Activated naive CD4-positive, alpha-beta T cell treated with anti-CD3 and anti-CD28 coated beads, Interleukin-2, amount 10 ng/mL, durations not matched to agents 7 days and 5 days (primary cell): ENCODE measurements at regions of chr7 and their contacts with region 1.

Region 1: DNA sequence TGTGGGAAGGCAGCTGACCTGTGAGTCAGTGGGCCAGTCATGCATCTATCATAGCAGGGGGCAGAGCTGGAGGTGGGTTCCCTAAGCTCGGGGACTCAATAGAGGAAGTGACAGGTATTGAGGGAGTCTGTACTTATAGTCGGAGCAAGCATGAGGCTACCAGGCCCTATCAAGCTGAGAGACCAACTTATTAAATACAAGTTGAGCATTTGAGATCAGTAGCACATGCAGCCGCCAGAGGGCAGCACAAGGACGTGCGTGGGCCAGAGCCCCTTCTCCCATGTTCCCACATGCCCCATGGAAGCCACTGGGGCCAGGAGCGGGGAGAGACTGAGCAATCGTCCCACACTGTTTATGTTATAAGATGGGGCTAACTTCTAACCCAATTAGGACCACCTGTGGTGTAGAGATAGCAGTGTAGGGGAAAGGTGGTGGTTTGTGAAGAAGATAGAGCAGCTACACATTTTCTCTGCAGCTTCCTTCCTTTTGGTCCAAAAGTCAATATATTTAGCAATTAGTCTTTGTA is 13.0 kb upstream of the STK31 start:
- DNase-seq: peak; percentile 65
- H3K4me3 Mint-ChIP-seq: no peak overlapping the region
- H3K27ac Mint-ChIP-seq: no peak overlapping the region
- H3K4me1 Mint-ChIP-seq: no peaks in the 10 kb centered on the region
- H3K27me3 Mint-ChIP-seq: no peaks in the 10 kb centered on the region

Region 2: GRCh38 chr7:23546897-23547572 is 149.9 kb before region 1 on chr7:
- CTCF ChIA-PET with region 1: interaction called, 15 read pairs
- DNase-seq: peak; percentile 84
- H3K4me3 Mint-ChIP-seq: no peak overlapping the region
- H3K27ac Mint-ChIP-seq: no peak overlapping the region
- H3K4me1 Mint-ChIP-seq: peaks cover 9% of the 10 kb centered on the region
- H3K27me3 Mint-ChIP-seq: peaks cover 8% of the 10 kb centered on the region

Region 3: GRCh38 chr7:23685731-23686130 is 11.2 kb before region 1 on chr7:
- CTCF ChIA-PET with region 1: interaction called, 14 read pairs
- DNase-seq: no peak
- H3K4me3 Mint-ChIP-seq: no peak overlapping the region
- H3K27ac Mint-ChIP-seq: no peak overlapping the region
- H3K4me1 Mint-ChIP-seq: peaks cover 8% of the 10 kb centered on the region
- H3K27me3 Mint-ChIP-seq: no peaks in the 10 kb centered on the region

Region 4: DNA sequence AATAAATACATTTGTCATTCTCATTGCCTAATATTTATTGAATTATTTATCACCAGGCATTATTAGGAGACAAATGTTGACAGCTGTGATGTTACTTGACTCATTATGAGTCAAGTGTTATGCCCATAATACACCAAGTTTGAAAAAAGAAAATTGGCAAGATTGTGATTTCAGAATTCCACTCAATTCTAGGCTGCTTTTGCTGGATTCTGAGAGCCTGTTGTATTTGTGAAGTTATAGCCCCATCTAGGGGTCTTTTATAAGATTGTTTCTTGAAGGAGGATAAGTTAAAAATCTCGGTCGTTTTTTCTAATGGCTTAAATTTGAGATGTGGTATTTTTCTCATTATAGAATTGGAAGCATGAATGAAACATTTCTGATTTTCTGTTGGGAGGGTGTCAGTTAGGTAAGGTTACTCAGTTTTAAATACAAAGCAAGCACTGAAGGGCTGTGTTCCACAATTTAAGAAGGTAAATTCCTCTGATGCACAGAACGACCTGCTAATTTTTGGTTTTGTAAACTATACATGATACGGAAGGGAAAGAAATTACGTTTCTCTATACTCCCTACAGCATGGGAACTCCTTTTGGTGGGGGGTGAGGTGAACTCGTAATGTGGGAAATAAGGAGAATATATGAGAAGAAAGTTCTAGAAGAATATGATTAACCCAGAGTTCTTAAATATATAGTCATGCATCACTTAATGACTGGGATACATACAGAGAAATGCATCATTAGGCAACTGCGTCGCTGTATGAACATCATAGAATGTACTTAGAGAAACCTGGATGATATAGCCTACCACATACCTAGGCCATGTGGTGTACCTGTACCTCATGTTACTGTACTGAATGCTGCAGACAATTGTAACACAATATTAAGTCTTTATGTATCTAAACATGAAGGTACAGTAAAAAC is 15.6 kb after region 1 on chr7:
- CTCF ChIA-PET with region 1: interaction called, 24 read pairs
- DNase-seq: no peak
- H3K4me3 Mint-ChIP-seq: no peak overlapping the region
- H3K27ac Mint-ChIP-seq: no peak overlapping the region
- H3K4me1 Mint-ChIP-seq: no peaks in the 10 kb centered on the region
- H3K27me3 Mint-ChIP-seq: peaks cover 4% of the 10 kb centered on the region